Activated naive CD4-positive, alpha-beta T cell treated with anti-CD3 and anti-CD28 coated beads, Interleukin-2, amount 10 ng/mL, durations not matched to agents 7 days and 5 days (primary cell): ENCODE measurements at regions of chr2 and their contacts with region 1.

Region 1: DNA sequence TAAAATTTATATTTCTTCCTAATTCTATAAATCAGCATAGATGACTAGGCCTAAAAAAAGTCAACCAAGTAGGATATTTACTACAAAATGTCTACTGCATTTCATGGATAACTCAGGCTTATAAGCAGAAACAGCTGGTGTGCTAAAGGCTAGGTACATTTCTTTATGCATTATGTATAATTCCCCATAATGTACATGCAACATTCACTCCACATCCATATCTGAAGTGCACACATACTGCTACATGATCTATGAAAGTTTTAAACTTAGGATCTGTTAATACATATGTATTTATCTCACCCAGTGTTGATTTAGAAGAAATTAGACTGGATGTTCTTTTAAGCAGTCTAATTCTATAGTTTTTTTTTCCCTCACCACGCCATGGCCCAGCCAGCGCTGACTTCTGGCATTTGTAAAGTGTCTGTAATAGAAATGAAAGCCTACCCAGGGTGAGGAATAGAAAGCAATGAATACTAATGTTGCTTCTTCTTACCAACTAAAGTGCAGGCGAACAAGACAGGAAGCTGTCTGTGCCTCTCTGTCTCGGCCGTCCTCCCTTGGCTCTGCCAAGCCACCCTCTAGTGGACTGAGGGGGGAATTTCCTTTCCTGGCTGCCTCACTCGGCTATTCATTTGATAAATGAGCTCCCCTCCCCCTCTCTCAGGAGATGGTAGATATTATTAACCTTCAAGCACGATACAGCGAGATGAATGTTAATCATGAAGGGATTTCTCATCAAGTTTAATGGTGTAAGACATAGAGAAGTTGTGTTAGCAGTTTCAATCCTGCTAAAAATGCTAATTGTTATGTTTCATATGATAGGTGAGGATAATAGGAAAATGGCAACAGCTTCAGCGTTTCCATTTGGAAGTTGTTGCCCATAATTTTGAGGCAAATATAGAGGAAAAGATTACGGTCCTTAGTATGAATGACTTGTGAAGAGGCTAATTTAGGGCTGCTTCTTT is 384.5 kb downstream of the MTX2 start:
- DNase-seq: peak; percentile 52
- H3K4me3 Mint-ChIP-seq: no peak overlapping the region
- H3K27ac Mint-ChIP-seq: no peak overlapping the region
- H3K4me1 Mint-ChIP-seq: peaks cover 5% of the 10 kb centered on the region
- H3K27me3 Mint-ChIP-seq: peaks cover 19% of the 10 kb centered on the region

Region 2: GRCh38 chr2:176126929-176127773 is 526.6 kb before region 1 on chr2:
- CTCF ChIA-PET with region 1: interaction called, 25 read pairs
- DNase-seq: peak; percentile 75
- H3K4me3 Mint-ChIP-seq: no peak overlapping the region
- H3K27ac Mint-ChIP-seq: peak overlapping the region; percentile 82
- H3K4me1 Mint-ChIP-seq: peaks cover 25% of the 10 kb centered on the region
- H3K27me3 Mint-ChIP-seq: peaks cover 95% of the 10 kb centered on the region

Region 3: DNA sequence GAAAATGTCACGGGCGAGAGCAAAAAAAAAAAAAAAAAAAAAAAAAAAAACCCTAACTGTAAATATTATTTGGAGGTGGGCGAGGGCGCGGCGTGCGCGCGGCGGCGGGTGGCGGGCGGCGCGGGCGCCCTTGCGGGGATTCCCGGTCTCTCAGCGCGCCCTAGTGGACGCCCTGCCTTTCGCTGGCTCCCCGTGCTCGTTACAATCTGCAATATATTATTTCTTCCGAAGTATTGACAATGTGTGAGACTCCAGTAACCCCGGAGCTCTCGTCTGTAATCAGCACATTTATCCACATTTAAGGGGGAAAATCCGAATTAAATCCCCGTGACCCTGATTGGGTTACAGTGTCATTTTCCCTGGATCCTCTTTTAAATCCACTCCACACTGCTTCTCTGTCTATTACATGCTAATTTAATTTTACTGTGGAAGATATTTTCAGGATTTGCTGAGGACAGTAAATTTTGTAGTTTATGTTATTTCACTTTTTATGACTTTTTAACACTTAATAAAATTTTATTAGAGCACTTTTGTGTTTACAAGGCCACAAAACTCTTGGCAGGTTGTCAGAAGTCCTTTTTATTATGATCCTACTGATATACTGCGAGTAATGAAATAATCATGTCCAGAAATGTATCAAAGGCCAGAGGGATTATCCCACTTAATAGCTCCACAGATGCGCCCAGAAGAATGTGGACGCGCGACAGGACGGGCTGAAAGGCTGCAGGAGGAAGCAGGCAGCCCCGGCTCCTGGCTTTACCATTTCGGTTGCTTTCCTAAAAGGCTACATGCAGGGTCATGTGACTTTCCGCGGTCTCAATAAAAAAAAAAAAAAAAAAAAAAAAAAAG is 15.4 kb before region 1 on chr2:
- CTCF ChIA-PET with region 1: interaction called, 10 read pairs
- DNase-seq: peak; percentile 68
- H3K4me3 Mint-ChIP-seq: peak overlapping the region; percentile 33
- H3K27ac Mint-ChIP-seq: no peak overlapping the region
- H3K4me1 Mint-ChIP-seq: no peaks in the 10 kb centered on the region
- H3K27me3 Mint-ChIP-seq: peaks cover 60% of the 10 kb centered on the region

Region 4: GRCh38 chr2:176669398-176670174 is 15.8 kb after region 1 on chr2:
- CTCF ChIA-PET with region 1: interaction called, 11 read pairs
- DNase-seq: no peak
- H3K4me3 Mint-ChIP-seq: no peak overlapping the region
- H3K27ac Mint-ChIP-seq: no peak overlapping the region
- H3K4me1 Mint-ChIP-seq: no peaks in the 10 kb centered on the region
- H3K27me3 Mint-ChIP-seq: peaks cover 12% of the 10 kb centered on the region

Region 5: DNA sequence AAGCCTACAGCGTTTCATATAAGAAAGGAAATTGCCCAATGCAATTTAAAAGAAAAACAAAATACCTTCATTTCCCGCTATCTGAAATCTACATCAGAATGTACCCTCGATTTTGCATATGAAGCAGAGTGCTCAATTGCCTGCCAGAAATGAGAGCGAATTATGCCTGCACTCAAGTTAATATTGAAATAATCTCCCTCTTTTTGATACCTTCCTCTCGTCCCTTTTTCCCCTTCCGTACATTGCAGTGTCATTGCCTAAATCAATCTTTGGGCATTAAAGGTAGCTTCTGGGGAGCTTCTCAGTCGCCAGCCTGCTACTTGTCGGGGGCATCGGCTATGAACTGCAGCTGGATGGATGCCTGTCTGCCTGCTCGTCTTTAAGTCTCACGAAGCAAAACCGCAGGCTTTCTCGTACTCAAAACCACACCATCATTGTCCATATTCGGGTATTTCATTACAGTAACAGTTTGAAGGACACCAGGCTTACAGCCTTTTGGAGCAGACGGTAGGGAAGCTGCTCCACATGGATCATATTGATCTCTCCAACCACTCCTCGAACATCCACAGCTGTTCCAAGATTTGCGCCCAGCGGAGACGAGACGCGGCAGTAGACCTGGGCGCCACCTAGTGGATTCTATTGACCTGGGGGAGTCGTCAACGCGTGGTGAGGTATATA is 494.9 kb after region 1 on chr2:
- CTCF ChIA-PET with region 1: interaction called, 34 read pairs
- DNase-seq: peak; percentile 82
- H3K4me3 Mint-ChIP-seq: peak overlapping the region; percentile 70
- H3K27ac Mint-ChIP-seq: no peak overlapping the region
- H3K4me1 Mint-ChIP-seq: peaks cover 15% of the 10 kb centered on the region
- H3K27me3 Mint-ChIP-seq: peaks cover 31% of the 10 kb centered on the region